Endothelial cell of umbilical vein (primary cell): ENCODE measurements at regions of chr1 and their contacts with region 1.

Region 1: GRCh38 chr1:111628153-111628552 is 8.6 kb downstream of the RAP1A start:
- DNase-seq: no peak
- H3K4me3 ChIP-seq: no peak overlapping the region
- H3K27ac ChIP-seq: no peak overlapping the region
- H3K4me1 ChIP-seq: no peaks in the 10 kb centered on the region
- H3K27me3 ChIP-seq: no peaks in the 10 kb centered on the region
- CTCF ChIP-seq: no peak
- POLR2A ChIP-seq: no peak

Region 2: GRCh38 chr1:111592389-111593361 is 35.5 kb before region 1 on chr1:
- CTCF ChIA-PET with region 1: no interaction called
- POLR2A ChIA-PET with region 1: no interaction called
- dilution Hi-C with region 1: no loop called
- intact Hi-C with region 1: no loop called
- DNase-seq: peak; percentile 95
- H3K4me3 ChIP-seq: no peak overlapping the region
- H3K27ac ChIP-seq: peak overlapping the region; percentile 16
- H3K4me1 ChIP-seq: peaks cover 15% of the 10 kb centered on the region
- H3K27me3 ChIP-seq: peaks cover 2 to 6% of the 10 kb centered on the region in 2 experiments
- CTCF ChIP-seq: no peak
- POLR2A ChIP-seq: no peak

Region 3: GRCh38 chr1:111615870-111616715 is 12.1 kb before region 1 on chr1:
- CTCF ChIA-PET with region 1: no interaction called
- POLR2A ChIA-PET with region 1: no interaction called
- dilution Hi-C with region 1: no loop called
- intact Hi-C with region 1: no loop called
- DNase-seq: no peak
- H3K4me3 ChIP-seq: no peak overlapping the region
- H3K27ac ChIP-seq: no peak overlapping the region
- H3K4me1 ChIP-seq: peaks cover 9% of the 10 kb centered on the region
- H3K27me3 ChIP-seq: peaks cover 4 to 5% of the 10 kb centered on the region in 2 experiments
- CTCF ChIP-seq: no peak
- POLR2A ChIP-seq: no peak

Region 4: GRCh38 chr1:111638320-111638719 is 10.2 kb after region 1 on chr1:
- CTCF ChIA-PET with region 1: no interaction called
- POLR2A ChIA-PET with region 1: no interaction called
- dilution Hi-C with region 1: no loop called
- intact Hi-C with region 1: loop called (anchors 1 kb)
- DNase-seq: no peak
- H3K4me3 ChIP-seq: no peak overlapping the region
- H3K27ac ChIP-seq: no peak overlapping the region
- H3K4me1 ChIP-seq: no peaks in the 10 kb centered on the region
- H3K27me3 ChIP-seq: no peaks in the 10 kb centered on the region
- CTCF ChIP-seq: no peak
- POLR2A ChIP-seq: no peak